Right cardiac atrium (tissue), 5 donors: ENCODE measurements at regions of chr1 and their contacts with region 1.

Region 1: DNA sequence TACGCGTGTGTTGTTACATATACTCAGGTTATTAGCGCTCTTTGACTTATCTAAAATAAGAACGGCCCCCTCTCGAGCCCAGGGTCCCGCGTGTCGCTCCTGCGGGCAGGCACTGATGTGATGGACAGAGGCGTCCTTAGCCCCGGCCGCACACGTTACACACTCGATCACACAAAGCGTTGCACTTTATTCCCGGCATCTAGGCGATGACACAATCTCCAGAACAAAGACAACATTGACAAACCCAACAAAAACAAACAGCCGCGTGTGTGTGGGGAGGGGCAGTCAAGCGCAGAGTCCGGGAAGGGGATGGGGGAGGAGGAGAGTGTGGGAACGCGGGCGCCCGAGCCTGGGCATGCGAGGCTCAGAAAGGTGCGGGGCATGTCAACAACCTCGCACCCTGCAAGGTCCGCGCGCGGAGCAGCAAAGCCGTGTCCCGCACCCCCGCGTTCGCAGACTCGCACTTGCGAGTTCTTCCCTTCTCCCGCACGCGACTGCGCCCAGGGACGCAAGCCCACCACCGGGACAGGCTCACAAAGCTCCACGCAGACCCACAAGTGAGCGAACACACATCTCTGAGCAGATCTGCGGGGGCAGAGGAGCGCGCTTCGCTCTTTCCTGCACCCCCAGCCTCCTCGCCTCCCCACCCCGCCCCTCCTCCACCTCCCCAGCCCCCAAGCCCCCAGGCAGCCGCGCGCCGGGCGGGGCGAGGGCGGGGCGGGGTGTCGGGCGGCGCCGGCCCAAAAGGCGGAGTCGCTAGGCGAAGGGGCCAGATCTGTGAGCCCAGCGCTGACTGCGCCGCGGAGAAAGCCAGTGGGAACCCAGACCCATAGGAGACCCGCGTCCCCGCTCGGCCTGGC is at the start of gene EFNA1:
- DNase-seq: peak; percentile 77 to 91 (median 91)
- ATAC-seq: peak; percentile 74 to 76
- H3K4me3 ChIP-seq: peak within 1 kb of the TSS; percentile 79
- H3K27ac ChIP-seq: peak within 1 kb of the TSS; percentile 81
- H3K4me1 ChIP-seq: no peaks in the 10 kb centered on the region
- H3K27me3 ChIP-seq: no peaks in the 10 kb centered on the region
- total RNA-seq, gene EFNA1: 25.4 to 41.4 (median 36.4) TPM

Region 2: GRCh38 chr1:155091071-155091709 is 36.1 kb before region 1 on chr1:
- intact Hi-C with region 1: loop called in 2 of 4 experiments (anchors 5 kb)
- DNase-seq: peak; percentile 81 to 94 (median 91)
- ATAC-seq: peak; percentile 28 to 65
- H3K4me3 ChIP-seq: no peak overlapping the region
- H3K27ac ChIP-seq: no peak overlapping the region
- H3K4me1 ChIP-seq: peaks cover 7% of the 10 kb centered on the region
- H3K27me3 ChIP-seq: no peaks in the 10 kb centered on the region

Region 3: DNA sequence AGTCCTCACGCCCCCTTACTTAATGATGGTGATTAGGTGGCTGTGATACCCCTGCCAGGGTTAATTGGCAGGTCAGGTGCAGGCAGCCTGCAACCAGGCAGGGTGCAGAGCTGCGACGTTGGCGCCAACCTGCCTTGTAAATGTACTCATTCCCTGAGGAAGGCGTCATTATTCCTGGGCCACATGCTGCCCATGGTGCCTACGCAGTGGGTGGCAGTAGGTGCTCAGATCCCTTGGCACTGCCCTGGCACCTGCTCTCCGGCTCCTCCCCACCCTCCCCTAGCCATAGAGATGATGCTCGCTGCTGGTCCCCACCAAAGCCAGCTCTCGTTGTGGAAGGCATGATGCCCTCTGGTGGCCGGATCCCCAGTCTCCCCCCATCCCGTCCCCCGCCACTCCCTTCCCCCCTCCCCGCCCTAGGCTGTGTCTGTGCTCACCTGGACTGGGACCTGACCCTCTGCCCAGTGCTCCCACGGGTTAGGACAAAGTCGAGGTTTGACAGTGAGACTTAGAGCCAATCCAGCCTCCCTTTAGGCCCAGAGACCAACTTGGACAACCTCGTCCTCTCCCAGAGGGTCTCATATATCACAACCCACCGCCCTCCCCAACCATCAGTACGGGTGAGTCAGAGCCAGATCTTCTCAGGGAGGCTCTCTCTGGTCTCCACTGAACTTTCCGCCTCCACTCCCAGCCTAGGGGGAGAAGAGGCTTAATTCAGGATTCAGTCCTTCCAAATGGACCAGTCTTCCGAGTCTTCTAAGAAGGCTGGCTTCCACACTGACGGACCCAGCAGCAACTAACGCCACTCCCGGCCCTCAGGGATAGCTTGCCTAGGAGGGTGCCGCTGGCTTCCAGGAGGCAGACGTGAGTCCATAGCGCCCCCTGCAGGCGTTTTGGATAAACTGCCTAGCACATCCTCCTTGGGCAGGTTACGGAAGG is 40.1 kb after region 1 on chr1:
- intact Hi-C with region 1: loop called in 1 of 4 experiments (anchors 5 kb)
- DNase-seq: peak; percentile 92 to 95 (median 94)
- ATAC-seq: peak; percentile 77 to 79
- H3K4me3 ChIP-seq: no peak overlapping the region
- H3K27ac ChIP-seq: peak overlapping the region; percentile 80
- H3K4me1 ChIP-seq: peaks cover 2% of the 10 kb centered on the region
- H3K27me3 ChIP-seq: no peaks in the 10 kb centered on the region